ENCODE measurements at regions of chr17 and their contacts with region 1.

Region 1: DNA sequence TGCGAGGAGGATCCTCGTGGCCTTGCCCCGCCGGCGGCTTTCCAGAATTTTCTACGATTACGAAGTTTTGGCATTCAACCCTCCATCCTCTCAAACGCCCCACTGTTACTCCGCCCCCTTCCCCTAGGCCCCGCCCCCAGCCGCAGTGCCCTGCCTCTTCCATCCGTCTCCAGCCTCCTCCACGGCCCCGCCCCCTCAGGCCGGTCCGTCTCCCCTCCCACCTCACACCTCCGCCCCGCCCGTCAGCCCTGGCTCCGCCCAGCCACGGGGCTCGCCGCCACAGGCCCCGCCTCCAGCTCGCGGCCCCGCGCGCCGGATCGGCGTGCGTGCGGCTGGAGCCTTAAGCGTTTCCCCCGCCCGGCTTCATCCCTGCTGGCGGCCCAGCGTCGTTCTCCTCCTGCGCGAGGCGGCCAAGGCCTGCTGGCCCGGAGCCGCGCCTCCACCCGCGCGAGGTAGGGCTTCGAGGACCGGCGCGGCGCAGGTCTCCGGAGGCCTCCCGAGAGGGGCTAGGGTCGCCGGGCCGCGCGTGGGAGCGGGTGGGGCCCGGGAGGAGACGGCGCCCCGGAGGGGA is at the starts of genes C17orf67 and DGKE:
- DNase-seq: peak; percentile 99
- H3K4me3 Mint-ChIP-seq: peak within 1 kb of the TSS; percentile 89
- H3K27ac Mint-ChIP-seq: peak within 1 kb of the TSS; percentile 70
- H3K4me1 Mint-ChIP-seq: peaks cover 55% of the 10 kb centered on the region
- H3K27me3 Mint-ChIP-seq: no peaks in the 10 kb centered on the region
- total RNA-seq, gene C17orf67: 1.9 to 2.2 TPM
- total RNA-seq, gene DGKE: 18.1 to 18.4 TPM

Region 2: GRCh38 chr17:56786989-56787482 is 46.9 kb before region 1 on chr17:
- CTCF ChIA-PET with region 1: no interaction called
- intact Hi-C with region 1: loop called (anchors 1 kb)
- DNase-seq: peak; percentile 86
- H3K4me3 Mint-ChIP-seq: peak overlapping the region; percentile 20
- H3K27ac Mint-ChIP-seq: peak overlapping the region; percentile 88
- H3K4me1 Mint-ChIP-seq: peaks cover 33% of the 10 kb centered on the region
- H3K27me3 Mint-ChIP-seq: no peaks in the 10 kb centered on the region

Region 3: DNA sequence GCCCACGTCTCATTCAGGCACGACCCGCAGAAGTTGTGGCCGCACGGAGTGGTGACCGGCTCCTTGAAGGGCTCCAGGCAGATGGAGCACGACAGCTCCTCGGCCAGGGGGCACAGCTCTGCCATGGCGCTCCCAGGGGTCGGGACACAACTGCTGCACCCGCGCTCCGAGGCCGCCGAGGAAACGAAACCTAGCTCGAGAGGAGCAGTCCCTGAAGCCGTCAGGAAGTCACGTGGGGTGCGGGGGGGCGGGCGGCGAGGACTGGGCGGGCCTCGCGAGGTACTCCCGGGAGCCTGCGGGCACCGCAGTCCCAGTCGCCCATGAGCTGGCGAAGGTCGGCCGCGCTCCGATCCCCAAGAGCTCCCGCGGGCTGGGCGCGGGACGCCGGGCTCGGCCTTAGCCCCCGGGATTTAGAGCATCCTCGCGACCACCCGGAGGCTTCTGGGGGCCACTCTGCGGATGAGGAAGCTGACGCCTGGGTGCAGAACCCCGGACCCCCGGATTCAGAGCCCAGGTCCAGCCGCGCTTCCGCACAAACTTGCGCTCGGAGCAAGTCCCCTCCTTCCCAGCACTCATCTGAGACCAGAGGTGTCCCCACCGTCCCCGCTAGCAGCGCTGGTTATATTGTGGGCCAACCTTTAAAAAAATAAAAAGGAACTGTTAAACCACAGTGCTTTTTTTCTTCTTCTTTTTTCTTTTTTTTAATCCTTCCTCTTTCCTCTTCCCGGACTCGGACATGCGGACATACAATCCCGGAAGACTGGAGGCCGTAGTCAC is 80.2 kb after region 1 on chr17 and contains the start of gene TRIM25:
- CTCF ChIA-PET with region 1: interaction called, 3 read pairs
- intact Hi-C with region 1: loop called (anchors 1 kb)
- DNase-seq: peak; percentile 94
- H3K4me3 Mint-ChIP-seq: peak within 1 kb of the TSS; percentile 83
- H3K27ac Mint-ChIP-seq: peak within 1 kb of the TSS; percentile 98
- H3K4me1 Mint-ChIP-seq: peaks cover 50% of the 10 kb centered on the region
- H3K27me3 Mint-ChIP-seq: no peaks in the 10 kb centered on the region
- total RNA-seq, gene TRIM25: 157 to 161 TPM

Region 4: DNA sequence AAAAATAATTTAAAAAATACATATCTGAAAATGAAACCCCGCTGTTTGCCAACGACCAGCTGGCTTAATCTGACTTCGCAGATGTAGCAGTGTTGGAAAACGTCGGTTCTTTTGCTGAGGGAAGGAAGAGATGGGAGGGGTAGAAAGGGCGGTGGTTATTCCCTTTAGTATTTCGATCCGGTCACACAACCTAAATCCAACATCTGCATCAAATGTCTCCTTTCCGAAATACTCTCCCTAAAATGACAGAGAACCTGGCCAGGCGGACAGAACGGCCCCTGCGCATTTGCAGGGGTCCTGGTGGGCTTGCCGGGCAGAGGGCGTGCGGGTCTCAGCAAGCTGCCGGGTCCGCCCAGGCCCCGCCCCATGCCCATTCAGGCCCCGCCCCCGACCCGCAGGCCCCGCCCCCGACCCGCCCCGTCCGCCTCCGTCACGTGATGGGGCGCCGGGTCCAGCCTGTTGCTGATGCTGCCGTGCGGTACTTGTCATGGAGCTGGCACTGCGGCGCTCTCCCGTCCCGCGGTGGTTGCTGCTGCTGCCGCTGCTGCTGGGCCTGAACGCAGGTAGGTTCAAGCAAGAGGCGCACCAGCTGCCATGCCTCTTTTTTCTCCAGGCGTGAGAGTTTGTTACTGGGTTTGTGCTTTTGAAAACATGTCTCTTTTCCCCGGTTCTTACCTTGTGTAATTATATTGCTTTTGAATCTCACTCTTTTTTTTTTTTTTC is 143.9 kb after region 1 on chr17 and contains the start of gene SCPEP1:
- CTCF ChIA-PET with region 1: interaction called, 3 read pairs
- intact Hi-C with region 1: loop called (anchors 1 kb)
- DNase-seq: peak; percentile 85
- H3K4me3 Mint-ChIP-seq: peak within 1 kb of the TSS; percentile 90
- H3K27ac Mint-ChIP-seq: peak within 1 kb of the TSS; percentile 39
- H3K4me1 Mint-ChIP-seq: peaks cover 19% of the 10 kb centered on the region
- H3K27me3 Mint-ChIP-seq: peaks cover 3% of the 10 kb centered on the region
- total RNA-seq, gene SCPEP1: 11.7 to 15.3 TPM

Measured in activated naive CD4-positive, alpha-beta T cell treated with anti-CD3 and anti-CD28 coated beads for 36 hours (primary cell).